AG04450 (cell line): ENCODE measurements at regions of chr4 and their contacts with region 1.

Region 1: GRCh38 chr4:118270492-118270891 is 82.3 kb downstream of the PRSS12 start:
- DNase-seq: no peak
- H3K4me3 ChIP-seq: no peak overlapping the region
- H3K27ac ChIP-seq: no peak overlapping the region
- H3K27me3 ChIP-seq: no peaks in the 10 kb centered on the region
- CTCF ChIP-seq: peak; percentile 52

Region 2: DNA sequence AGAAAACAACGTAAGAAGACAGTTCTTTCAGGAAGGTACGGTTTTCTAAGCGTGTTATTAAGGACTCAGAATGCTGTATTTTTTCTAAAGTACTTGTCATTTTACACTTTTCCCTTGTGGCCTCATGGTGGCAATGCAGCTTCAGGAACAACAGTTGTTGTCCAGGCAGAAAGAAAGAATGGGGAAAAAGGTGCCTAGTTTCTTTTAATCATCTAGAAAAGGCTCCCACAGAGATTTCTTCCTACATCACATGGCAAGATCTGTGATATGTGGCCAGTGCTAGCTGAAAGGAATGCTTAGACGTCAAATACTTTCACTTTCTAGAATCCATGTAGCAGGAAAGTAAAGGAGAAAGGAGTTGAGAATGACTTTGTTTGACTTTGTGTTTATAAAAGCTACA is 1136.1 kb before region 1 on chr4:
- CTCF ChIA-PET with region 1: interaction called, 22 read pairs
- POLR2A ChIA-PET with region 1: no interaction called
- DNase-seq: peak; percentile 60
- H3K4me3 ChIP-seq: no peak overlapping the region; the same call in 1 of the 2 replicates
- H3K27ac ChIP-seq: no peak overlapping the region
- H3K27me3 ChIP-seq: no peaks in the 10 kb centered on the region
- CTCF ChIP-seq: peak; percentile 70

Region 3: GRCh38 chr4:117831060-117831683 is 439.3 kb before region 1 on chr4:
- CTCF ChIA-PET with region 1: no interaction called
- POLR2A ChIA-PET with region 1: no interaction called
- DNase-seq: no peak
- H3K4me3 ChIP-seq: no peak overlapping the region
- H3K27ac ChIP-seq: no peak overlapping the region
- H3K27me3 ChIP-seq: no peaks in the 10 kb centered on the region
- CTCF ChIP-seq: no peak

Region 4: DNA sequence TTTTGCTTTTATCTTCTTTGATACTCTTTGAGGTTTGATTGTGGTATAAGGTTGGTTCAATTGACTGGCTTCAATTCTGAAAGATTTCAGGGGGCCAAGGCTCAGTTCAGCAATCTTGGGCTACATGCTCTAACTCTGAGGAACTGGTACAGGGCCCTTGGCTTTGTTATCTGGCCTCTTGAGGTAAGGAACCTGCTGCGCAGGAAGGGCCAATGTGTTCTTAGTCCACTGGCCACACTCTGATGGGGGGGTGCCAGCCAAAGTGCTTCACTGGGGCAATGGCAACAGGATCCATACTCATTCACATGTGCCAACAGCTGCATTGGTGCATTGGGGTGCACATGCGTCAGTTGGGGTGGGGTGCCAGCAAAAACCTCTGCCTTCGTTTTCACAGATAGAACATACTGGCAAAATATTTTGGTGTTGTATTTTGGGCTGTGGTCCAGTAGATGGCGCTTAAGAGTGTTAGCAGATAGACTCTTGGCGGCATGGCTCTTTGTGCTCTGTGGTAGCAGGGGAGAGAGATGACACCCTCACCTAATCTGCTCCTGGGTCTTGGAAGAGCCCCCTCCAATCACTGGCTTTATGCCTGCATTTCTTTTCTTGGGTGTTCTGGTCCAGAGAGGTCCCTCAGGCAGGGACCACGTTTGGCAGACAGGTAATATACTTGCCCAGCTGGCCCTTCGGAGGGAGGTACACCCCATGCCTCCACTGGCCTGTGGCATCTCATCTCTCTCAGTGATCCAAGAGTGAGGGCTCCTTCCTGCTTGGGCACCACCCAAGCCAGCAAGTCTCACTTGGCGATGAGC is 193.3 kb before region 1 on chr4:
- CTCF ChIA-PET with region 1: interaction called, 11 read pairs
- POLR2A ChIA-PET with region 1: no interaction called
- DNase-seq: no peak
- H3K4me3 ChIP-seq: no peak overlapping the region
- H3K27ac ChIP-seq: no peak overlapping the region
- H3K27me3 ChIP-seq: no peaks in the 10 kb centered on the region
- CTCF ChIP-seq: peak; percentile 65

Region 5: GRCh38 chr4:118260309-118260708 is 10.2 kb before region 1 on chr4:
- CTCF ChIA-PET with region 1: interaction called, 14 read pairs
- POLR2A ChIA-PET with region 1: no interaction called
- DNase-seq: no peak
- H3K4me3 ChIP-seq: no peak overlapping the region
- H3K27ac ChIP-seq: no peak overlapping the region
- H3K27me3 ChIP-seq: no peaks in the 10 kb centered on the region
- CTCF ChIP-seq: no peak

Region 6: GRCh38 chr4:118589471-118590055 is 319.1 kb after region 1 on chr4:
- CTCF ChIA-PET with region 1: no interaction called
- POLR2A ChIA-PET with region 1: no interaction called
- DNase-seq: no peak
- H3K4me3 ChIP-seq: no peak overlapping the region
- H3K27ac ChIP-seq: no peak overlapping the region
- H3K27me3 ChIP-seq: peaks cover 17% of the 10 kb centered on the region
- CTCF ChIP-seq: no peak